Prostate gland (tissue), 2 donors: ENCODE measurements at regions of chr14 and their contacts with region 1.

Region 1: GRCh38 chr14:75720842-75721498 is 59.9 kb downstream of the TTLL5 start:
- DNase-seq: peak; percentile 81
- H3K4me3 ChIP-seq: no peak overlapping the region
- H3K27ac ChIP-seq: peak overlapping the region; percentile 75 to 81
- H3K4me1 ChIP-seq: peaks cover 12% of the 10 kb centered on the region
- H3K27me3 ChIP-seq: no peaks in the 10 kb centered on the region
- CTCF ChIP-seq: no peak
- POLR2A ChIP-seq: no peak

Region 2: DNA sequence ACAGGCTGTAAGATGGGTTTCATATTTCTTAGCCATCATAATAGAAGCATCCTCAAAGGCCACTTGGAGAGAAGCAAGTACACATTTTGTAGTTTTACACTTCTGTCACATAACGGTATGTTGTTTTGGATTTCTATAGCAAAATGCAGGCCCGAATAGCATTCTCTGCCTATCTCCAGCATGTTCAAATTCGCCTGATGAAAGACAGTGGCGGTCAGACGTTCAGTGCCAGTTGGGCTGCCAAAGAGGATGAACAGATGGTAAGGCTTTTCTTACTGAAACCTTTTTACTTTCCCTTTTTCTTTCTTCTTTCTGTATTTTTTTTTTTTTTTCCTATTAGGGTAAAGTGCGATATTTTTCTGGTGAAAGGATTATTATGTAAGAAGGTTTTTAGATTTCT is 50.6 kb after region 1 on chr14:
- intact Hi-C with region 1: loop called (anchors 10 kb)
- DNase-seq: no peak
- H3K4me3 ChIP-seq: no peak overlapping the region
- H3K27ac ChIP-seq: no peak overlapping the region
- H3K4me1 ChIP-seq: no peaks in the 10 kb centered on the region
- H3K27me3 ChIP-seq: no peaks in the 10 kb centered on the region
- CTCF ChIP-seq: no peak
- POLR2A ChIP-seq: no peak

Region 3: DNA sequence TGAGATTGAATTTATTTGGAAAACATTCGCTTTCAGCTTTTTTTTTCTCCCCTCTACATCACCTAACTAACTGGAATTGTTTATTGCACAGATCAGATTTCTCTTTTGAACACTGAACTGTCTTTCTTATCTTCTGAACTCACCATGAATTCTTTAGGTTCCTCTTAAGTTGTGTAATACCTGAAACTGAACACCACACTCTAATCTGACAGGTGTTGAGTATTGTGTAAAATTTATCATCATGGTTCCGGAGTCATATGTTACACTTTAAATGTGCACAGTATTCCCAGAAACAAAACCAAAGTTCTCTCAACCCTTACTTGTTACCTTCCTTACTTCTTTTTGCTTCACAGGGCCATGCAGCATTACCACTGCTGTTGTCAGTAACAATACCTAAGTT is 194.1 kb after region 1 on chr14:
- intact Hi-C with region 1: no loop called
- DNase-seq: no peak
- H3K4me3 ChIP-seq: no peak overlapping the region
- H3K27ac ChIP-seq: no peak overlapping the region
- H3K4me1 ChIP-seq: no peaks in the 10 kb centered on the region
- H3K27me3 ChIP-seq: no peaks in the 10 kb centered on the region
- CTCF ChIP-seq: no peak
- POLR2A ChIP-seq: no peak